Aorta (tissue), 5 donors: ENCODE measurements at regions of chr6 and their contacts with region 1.

Region 1: GRCh38 chr6:143410859-143411270 is 39.6 kb downstream of the ADAT2 start:
- DNase-seq: no peak
- ATAC-seq: no peak
- H3K4me3 ChIP-seq: no peak overlapping the region
- H3K27ac ChIP-seq: peak overlapping the region in 1 of 2 donors; percentile 57
- H3K4me1 ChIP-seq: no peaks in the 10 kb centered on the region
- H3K27me3 ChIP-seq: no peaks in the 10 kb centered on the region

Region 2: GRCh38 chr6:143060354-143060805 is 350.5 kb before region 1 on chr6:
- intact Hi-C with region 1: loop called in 1 of 2 experiments (anchors 10 kb)
- DNase-seq: peak; percentile 92 to 95
- ATAC-seq: peak; percentile 94
- H3K4me3 ChIP-seq: peak overlapping the region; percentile 69 to 77
- H3K27ac ChIP-seq: peak overlapping the region; percentile 78 to 80
- H3K4me1 ChIP-seq: no peaks in the 10 kb centered on the region
- H3K27me3 ChIP-seq: no peaks in the 10 kb centered on the region

Region 3: GRCh38 chr6:143078468-143079324 is 332.2 kb before region 1 on chr6:
- intact Hi-C with region 1: loop called in 1 of 2 experiments (anchors 10 kb)
- DNase-seq: no peak
- ATAC-seq: no peak
- H3K4me3 ChIP-seq: no peak overlapping the region
- H3K27ac ChIP-seq: no peak overlapping the region
- H3K4me1 ChIP-seq: no peaks in the 10 kb centered on the region
- H3K27me3 ChIP-seq: no peaks in the 10 kb centered on the region

Region 4: GRCh38 chr6:143286251-143286795 is 124.5 kb before region 1 on chr6:
- intact Hi-C with region 1: no loop called
- DNase-seq: no peak
- ATAC-seq: no peak
- H3K4me3 ChIP-seq: no peak overlapping the region
- H3K27ac ChIP-seq: peak overlapping the region; percentile 5 to 28
- H3K4me1 ChIP-seq: peaks cover 5 to 14% of the 10 kb centered on the region in 2 donors
- H3K27me3 ChIP-seq: no peaks in the 10 kb centered on the region

Region 5: DNA sequence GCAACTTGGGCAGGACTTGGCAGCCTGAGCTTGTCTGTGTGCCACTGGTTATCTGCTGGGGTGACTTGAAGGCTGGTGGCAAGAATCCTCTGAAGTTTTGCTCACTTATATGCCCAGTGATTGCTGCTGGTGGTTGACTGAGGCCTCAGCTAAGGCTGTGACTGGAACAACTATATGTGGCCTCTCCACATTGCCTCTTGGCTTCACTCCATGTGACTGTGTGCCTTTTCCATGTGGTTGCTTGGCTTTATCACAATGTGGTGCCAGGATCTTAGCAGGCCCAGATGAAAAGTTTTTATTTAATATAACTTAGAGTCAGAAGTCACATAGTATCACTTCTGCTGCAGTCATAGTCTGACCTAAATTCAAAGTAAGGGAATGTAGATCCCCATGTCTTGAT is 64.9 kb before region 1 on chr6:
- intact Hi-C with region 1: loop called in 1 of 2 experiments (anchors 5 kb)
- DNase-seq: no peak
- ATAC-seq: no peak
- H3K4me3 ChIP-seq: no peak overlapping the region
- H3K27ac ChIP-seq: no peak overlapping the region
- H3K4me1 ChIP-seq: no peaks in the 10 kb centered on the region
- H3K27me3 ChIP-seq: no peaks in the 10 kb centered on the region

Region 6: DNA sequence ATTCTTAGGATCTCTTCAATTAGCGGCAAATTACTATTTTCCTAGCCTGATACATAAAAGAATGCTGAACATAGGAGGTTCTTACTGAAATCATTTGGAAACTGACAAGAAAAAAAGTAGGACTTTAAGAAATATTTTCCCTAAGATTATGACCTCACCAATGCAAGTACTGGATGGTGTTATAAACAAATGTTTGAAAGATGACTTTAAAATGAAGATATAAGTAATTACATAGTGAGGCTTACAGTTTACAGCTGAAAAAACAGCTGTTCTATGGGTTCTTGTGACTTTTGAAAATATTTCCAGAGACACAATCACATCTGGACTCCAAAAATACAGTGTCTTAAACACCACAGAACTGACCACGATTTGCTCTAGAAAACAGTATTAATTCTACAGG is 25.2 kb before region 1 on chr6:
- intact Hi-C with region 1: no loop called
- DNase-seq: no peak
- ATAC-seq: no peak
- H3K4me3 ChIP-seq: no peak overlapping the region
- H3K27ac ChIP-seq: no peak overlapping the region
- H3K4me1 ChIP-seq: no peaks in the 10 kb centered on the region
- H3K27me3 ChIP-seq: no peaks in the 10 kb centered on the region